ENCODE measurements at regions of chr5 and their contacts with region 1.

Region 1: GRCh38 chr5:53008751-53009150 is 19.6 kb downstream of the ITGA2 start:
- DNase-seq: peak; percentile 79
- H3K4me3 Mint-ChIP-seq: no peak overlapping the region
- H3K27ac Mint-ChIP-seq: peak overlapping the region; percentile 76
- H3K4me1 Mint-ChIP-seq: peaks cover 62% of the 10 kb centered on the region
- H3K27me3 Mint-ChIP-seq: peaks cover 5% of the 10 kb centered on the region

Region 2: DNA sequence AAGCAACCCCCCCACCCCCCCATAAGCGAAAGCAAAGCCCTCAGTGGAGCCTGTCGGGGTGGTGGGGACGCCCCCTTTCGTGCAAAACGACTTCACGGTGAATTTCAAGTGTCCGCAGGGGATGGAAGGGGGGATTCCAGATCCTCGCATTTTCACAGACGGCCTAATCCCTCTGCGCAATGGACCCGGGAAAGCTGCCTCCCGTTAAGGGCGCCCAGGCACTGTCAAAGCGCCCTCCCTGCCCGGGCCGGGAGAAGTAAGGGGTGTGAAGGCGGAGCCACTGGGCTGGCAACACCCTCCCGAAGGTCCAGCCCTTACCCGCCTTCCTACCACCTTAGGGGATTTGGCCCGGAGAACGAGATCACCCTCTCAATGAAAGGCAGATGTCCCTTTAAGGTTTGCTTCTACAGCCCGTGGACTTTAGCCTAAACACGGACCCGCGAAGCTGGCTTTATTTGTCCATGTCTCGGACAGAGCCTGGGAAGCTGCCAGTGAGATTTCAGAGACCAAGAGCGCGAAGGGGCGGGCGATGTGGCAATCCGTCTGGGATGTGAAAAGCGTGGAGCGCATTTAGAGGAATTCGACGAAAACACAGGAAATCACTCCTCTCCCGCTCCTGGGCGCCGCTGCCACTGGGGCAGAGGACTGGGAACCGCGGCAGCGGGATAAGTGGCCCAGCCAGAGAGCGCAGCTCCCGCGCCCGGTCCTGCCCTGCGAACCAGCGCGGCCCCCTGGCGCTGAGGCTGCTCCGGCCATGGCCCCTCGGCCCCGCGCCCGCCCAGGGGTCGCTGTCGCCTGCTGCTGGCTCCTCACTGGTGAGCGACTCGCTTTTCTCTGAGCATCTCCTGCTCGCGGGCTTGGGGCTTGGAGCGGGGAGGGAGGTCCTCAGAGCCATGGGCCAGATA is 220.9 kb before region 1 on chr5 and contains the starts of genes ITGA1 and PELO:
- CTCF ChIA-PET with region 1: no interaction called
- intact Hi-C with region 1: loop called (anchors 5 kb)
- DNase-seq: peak; percentile 79
- H3K4me3 Mint-ChIP-seq: peak within 1 kb of the TSS; percentile 84
- H3K27ac Mint-ChIP-seq: peak within 1 kb of the TSS; percentile 44
- H3K4me1 Mint-ChIP-seq: peaks cover 15% of the 10 kb centered on the region
- H3K27me3 Mint-ChIP-seq: peaks cover 4% of the 10 kb centered on the region
- total RNA-seq, gene ITGA1: 0.69 to 1.2 TPM
- total RNA-seq, gene PELO: 11.4 to 12.8 TPM

Region 3: GRCh38 chr5:52989781-52990527 is 18.8 kb before region 1 on chr5:
- CTCF ChIA-PET with region 1: interaction called, 5 read pairs
- intact Hi-C with region 1: loop called (anchors 1 kb)
- DNase-seq: peak; percentile 73
- H3K4me3 Mint-ChIP-seq: peak overlapping the region; percentile 79
- H3K27ac Mint-ChIP-seq: peak overlapping the region; percentile 50
- H3K4me1 Mint-ChIP-seq: peaks cover 21% of the 10 kb centered on the region
- H3K27me3 Mint-ChIP-seq: peaks cover 4% of the 10 kb centered on the region

Region 4: GRCh38 chr5:53035868-53036381 is 27.2 kb after region 1 on chr5:
- CTCF ChIA-PET with region 1: interaction called, 6 read pairs
- intact Hi-C with region 1: loop called (anchors 1 kb)
- DNase-seq: no peak
- H3K4me3 Mint-ChIP-seq: no peak overlapping the region
- H3K27ac Mint-ChIP-seq: no peak overlapping the region
- H3K4me1 Mint-ChIP-seq: peaks cover 39% of the 10 kb centered on the region
- H3K27me3 Mint-ChIP-seq: no peaks in the 10 kb centered on the region

Region 5: GRCh38 chr5:53069626-53070025 is 60.9 kb after region 1 on chr5:
- CTCF ChIA-PET with region 1: interaction called, 5 read pairs
- intact Hi-C with region 1: loop called (anchors 1 kb)
- DNase-seq: peak; percentile 88
- H3K4me3 Mint-ChIP-seq: no peak overlapping the region
- H3K27ac Mint-ChIP-seq: peak overlapping the region; percentile 12
- H3K4me1 Mint-ChIP-seq: peaks cover 15% of the 10 kb centered on the region
- H3K27me3 Mint-ChIP-seq: no peaks in the 10 kb centered on the region

Region 6: DNA sequence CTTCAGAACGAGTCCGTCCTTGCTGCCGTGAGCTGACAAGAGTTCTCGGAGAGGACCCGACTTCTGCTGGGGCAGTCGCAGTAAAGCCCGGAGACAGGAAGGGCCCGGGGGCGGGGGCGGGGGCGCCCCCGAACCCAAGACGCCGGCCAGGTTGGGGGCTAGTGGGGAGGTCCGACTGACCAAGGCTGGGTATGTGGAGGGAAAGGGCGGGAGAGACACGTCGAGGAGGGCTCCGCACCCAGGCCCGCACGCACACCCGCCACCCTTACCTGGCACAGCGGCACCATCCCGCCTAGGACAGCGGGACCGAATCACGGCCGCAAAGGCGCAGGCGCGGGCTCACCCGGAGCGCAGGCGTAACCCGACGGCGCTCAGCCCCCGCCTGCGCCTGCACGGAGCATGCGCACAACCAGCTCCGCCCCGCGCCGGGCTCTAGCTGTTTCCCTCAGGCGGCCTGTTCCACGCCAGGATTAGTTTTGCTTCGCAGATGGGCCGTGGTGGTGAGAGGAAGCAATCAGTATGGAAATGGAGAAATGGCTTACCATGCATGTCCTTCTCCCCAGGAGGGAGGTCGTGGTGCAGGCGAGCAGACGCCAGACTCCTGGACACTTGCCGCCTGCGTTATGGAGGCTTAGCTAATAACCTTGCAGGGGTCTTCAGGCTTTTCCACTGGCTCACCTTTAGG is 100.8 kb after region 1 on chr5 and contains the start of gene MOCS2:
- CTCF ChIA-PET with region 1: no interaction called
- intact Hi-C with region 1: loop called (anchors 1 kb)
- DNase-seq: peak; percentile 91
- H3K4me3 Mint-ChIP-seq: peak within 1 kb of the TSS; percentile 92
- H3K27ac Mint-ChIP-seq: peak within 1 kb of the TSS; percentile 86
- H3K4me1 Mint-ChIP-seq: peaks cover 37% of the 10 kb centered on the region
- H3K27me3 Mint-ChIP-seq: no peaks in the 10 kb centered on the region
- total RNA-seq, gene MOCS2: 29.4 to 30.9 TPM

Measured in activated naive CD4-positive, alpha-beta T cell treated with anti-CD3 and anti-CD28 coated beads for 36 hours (primary cell).